Tibial artery (tissue), 4 donors: ENCODE measurements at regions of chr20 and their contacts with region 1.

Region 1: GRCh38 chr20:34302723-34303528 is at the start of gene AHCY:
- DNase-seq: peak; percentile 97 to 98
- H3K4me3 ChIP-seq: peak within 1 kb of the TSS; percentile 65 to 75
- H3K27ac ChIP-seq: peak within 1 kb of the TSS; percentile 85 to 90
- H3K4me1 ChIP-seq: peaks cover 0 to 18% (median 14%) of the 10 kb centered on the region in 4 donors
- H3K27me3 ChIP-seq: no peaks in the 10 kb centered on the region
- CTCF ChIP-seq: peak in 1 of 2 experiments; percentile 19

Region 2: GRCh38 chr20:34709831-34710567 is 407.1 kb after region 1 on chr20:
- intact Hi-C with region 1: loop called (anchors 5 kb)
- DNase-seq: peak; percentile 26 to 90
- H3K4me3 ChIP-seq: peak overlapping the region; percentile 72 to 78
- H3K27ac ChIP-seq: peak overlapping the region; percentile 81 to 95
- H3K4me1 ChIP-seq: peaks cover 0 to 30% (median 17%) of the 10 kb centered on the region in 4 donors
- H3K27me3 ChIP-seq: no peaks in the 10 kb centered on the region
- CTCF ChIP-seq: no peak